Pancreas (tissue), 10 donors: ENCODE measurements at regions of chr20 and their contacts with region 1.

Region 1: GRCh38 chr20:32484958-32485769 is 100.0 kb downstream of the NOL4L start:
- DNase-seq: peak in 4 of 6 donors; percentile 65 to 76 (median 72)
- ATAC-seq: peak; percentile 34 to 68 (median 57)
- H3K4me3 ChIP-seq: peak overlapping the region in 2 of 4 donors; percentile 52 to 80
- H3K27ac ChIP-seq: peak overlapping the region in 3 of 4 donors; percentile 64 to 88 (median 81)
- H3K4me1 ChIP-seq: peaks cover 5 to 20% (median 10%) of the 10 kb centered on the region in 3 donors
- H3K27me3 ChIP-seq: no peaks in the 10 kb centered on the region
- CTCF ChIP-seq: peak; percentile 50 to 80 (median 61)

Region 2: DNA sequence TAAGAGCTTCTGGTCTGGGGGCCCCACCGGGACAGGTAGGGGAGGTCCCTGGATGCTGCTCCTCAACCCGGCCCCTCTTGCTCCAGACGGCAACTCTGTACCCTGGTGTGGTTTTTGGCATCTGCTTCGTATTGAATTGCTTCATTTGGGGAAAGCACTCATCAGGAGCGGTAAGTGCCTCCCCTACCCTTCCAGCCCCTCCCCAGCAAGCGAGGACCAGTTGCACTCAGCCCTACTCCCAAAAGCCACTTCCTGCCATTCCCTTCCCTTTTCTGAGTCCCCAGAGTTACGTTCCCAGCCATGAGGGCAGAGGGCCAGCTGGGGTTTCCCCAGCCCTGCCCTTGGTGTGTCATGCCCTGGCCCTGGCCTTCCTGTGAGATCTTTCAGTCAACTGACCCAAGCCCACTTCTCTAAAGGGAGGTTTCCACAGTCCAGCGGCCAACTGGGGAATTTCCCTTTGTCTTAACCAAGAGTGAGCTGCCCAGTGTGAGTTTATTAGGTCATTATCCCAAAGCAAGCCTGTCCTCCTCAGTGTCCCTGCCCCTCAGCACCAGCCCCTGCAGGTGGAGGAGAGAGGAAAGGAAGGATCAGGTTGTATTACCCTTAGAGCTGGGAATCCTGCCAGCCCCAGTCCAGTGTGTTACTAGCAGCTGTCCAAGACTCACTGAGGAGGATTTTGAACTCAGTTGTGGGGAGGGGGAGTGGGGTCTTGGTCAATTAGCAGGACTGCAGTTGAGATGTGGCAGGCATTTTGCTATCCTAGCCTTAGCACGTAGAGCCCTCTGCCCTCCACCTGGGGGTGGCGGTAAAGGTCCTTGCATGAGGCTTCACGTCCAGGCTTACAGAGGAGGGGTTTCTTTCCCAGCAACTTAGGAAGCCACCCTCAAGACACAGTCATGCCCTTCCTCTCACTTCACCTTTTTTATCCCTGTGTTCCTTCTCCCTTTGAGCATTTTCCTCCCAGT is 329.9 kb before region 1 on chr20:
- intact Hi-C with region 1: loop called in 1 of 3 experiments (anchors 10 kb)
- DNase-seq: peak in 5 of 6 donors; percentile 47 to 79 (median 52)
- ATAC-seq: peak; percentile 68 to 94 (median 88)
- H3K4me3 ChIP-seq: no peak overlapping the region
- H3K27ac ChIP-seq: peak overlapping the region in 2 of 4 donors; percentile 44 to 52
- H3K4me1 ChIP-seq: peaks cover 0 to 14% (median 0%) of the 10 kb centered on the region in 3 donors
- H3K27me3 ChIP-seq: no peaks in the 10 kb centered on the region
- CTCF ChIP-seq: no peak

Region 3: DNA sequence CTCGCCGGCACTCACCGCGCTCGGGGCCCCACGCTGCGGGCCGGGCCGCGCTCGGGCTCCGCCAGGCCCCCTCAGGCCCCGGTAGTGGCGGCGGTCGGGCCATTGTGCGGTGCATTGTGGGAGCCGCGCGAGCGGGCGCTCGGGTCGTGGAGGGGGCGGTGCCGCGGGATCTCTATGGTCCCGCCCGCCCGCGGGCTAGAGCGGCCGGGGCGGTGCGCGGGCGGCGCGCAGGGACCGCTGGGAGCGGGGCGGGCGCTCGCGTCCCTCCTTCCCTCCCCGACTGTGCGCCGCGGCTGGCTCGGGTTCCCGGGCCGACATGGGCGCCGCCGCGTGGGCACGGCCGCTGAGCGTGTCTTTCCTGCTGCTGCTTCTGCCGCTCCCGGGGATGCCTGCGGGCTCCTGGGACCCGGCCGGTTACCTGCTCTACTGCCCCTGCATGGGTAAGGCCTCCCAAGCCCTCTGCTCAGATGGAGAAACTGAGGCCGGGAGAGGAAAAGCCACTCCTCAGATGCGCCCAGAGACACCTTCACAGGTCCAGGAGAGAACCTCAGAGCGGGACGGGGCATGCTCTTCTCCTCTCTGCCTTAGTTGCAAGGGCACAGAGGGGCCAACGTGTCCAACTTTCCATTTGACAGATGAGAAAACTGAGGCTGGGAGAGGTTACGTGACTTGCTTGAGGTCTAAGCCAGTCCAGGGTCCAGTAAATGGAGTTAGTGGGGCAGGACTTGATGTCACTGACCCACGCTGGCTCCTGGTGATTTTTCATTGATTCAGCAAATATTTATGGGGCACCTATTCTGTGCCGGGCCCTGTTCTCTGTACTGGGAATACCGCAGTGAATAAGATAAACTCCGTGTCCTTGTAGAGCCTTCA is 277.3 kb before region 1 on chr20 and contains the starts of genes PLAGL2 and POFUT1:
- intact Hi-C with region 1: loop called in 1 of 3 experiments (anchors 10 kb)
- DNase-seq: peak; percentile 88 to 96 (median 90)
- ATAC-seq: peak; percentile 92 to 97 (median 94)
- H3K4me3 ChIP-seq: peak within 1 kb of the TSS; percentile 92 to 98 (median 96)
- H3K27ac ChIP-seq: peak within 1 kb of the TSS; percentile 72 to 91 (median 86)
- H3K4me1 ChIP-seq: peaks cover 29 to 46% (median 38%) of the 10 kb centered on the region in 3 donors
- H3K27me3 ChIP-seq: no peaks in the 10 kb centered on the region
- CTCF ChIP-seq: no peak
- total RNA-seq, gene PLAGL2: 3.3 to 7.2 (median 4.6) TPM
- total RNA-seq, gene POFUT1: 10.9 to 20.7 (median 16.8) TPM

Region 4: DNA sequence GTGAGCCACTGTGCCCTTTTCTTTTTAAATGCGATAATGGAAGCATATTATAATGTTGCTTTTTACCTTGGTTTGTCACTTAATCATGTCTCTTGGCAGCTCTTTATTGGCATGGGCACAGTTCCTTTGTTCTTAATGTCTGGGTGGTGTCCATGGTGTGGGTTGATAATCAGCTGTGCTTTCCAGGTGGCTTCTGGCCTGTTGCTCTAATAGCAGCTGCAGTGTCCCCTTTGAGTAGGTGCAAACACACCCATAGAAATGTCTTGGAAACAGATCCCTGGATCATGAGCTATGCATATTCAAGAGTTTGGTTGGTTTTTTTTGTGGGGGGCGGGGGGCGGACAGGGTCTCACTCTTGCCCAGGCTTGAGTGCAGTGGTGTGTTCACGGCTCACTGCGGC is 403.5 kb after region 1 on chr20:
- intact Hi-C with region 1: no loop called
- DNase-seq: peak in 2 of 6 donors; percentile 42 to 66
- ATAC-seq: peak; percentile 78 to 91 (median 86)
- H3K4me3 ChIP-seq: no peak overlapping the region
- H3K27ac ChIP-seq: no peak overlapping the region
- H3K4me1 ChIP-seq: peaks cover 0 to 5% (median 0%) of the 10 kb centered on the region in 3 donors
- H3K27me3 ChIP-seq: no peaks in the 10 kb centered on the region
- CTCF ChIP-seq: no peak